Calu3 (cell line): ENCODE measurements at regions of chr2 and their contacts with region 1.

Region 1: GRCh38 chr2:180291060-180291459 is 284.0 kb upstream of the CWC22 start:
- DNase-seq: no peak
- H3K4me3 Mint-ChIP-seq: peak overlapping the region; percentile 42
- H3K27ac Mint-ChIP-seq: peak overlapping the region; percentile 80
- H3K4me1 Mint-ChIP-seq: peaks cover 50% of the 10 kb centered on the region
- H3K27me3 Mint-ChIP-seq: no peaks in the 10 kb centered on the region
- CTCF ChIP-seq: no peak

Region 2: GRCh38 chr2:180411661-180412060 is 120.6 kb after region 1 on chr2:
- CTCF ChIA-PET with region 1: interaction called, 3 read pairs
- intact Hi-C with region 1: loop called (anchors 2 kb)
- DNase-seq: peak; percentile 30
- H3K4me3 Mint-ChIP-seq: peak overlapping the region; percentile 40
- H3K27ac Mint-ChIP-seq: peak overlapping the region; percentile 83
- H3K4me1 Mint-ChIP-seq: peaks cover 29% of the 10 kb centered on the region
- H3K27me3 Mint-ChIP-seq: no peaks in the 10 kb centered on the region
- CTCF ChIP-seq: no peak

Region 3: GRCh38 chr2:180573958-180574357 is 282.9 kb after region 1 on chr2:
- CTCF ChIA-PET with region 1: no interaction called
- intact Hi-C with region 1: loop called (anchors 5 kb)
- DNase-seq: peak; percentile 30
- H3K4me3 Mint-ChIP-seq: peak overlapping the region; percentile 14
- H3K27ac Mint-ChIP-seq: peak overlapping the region; percentile 82
- H3K4me1 Mint-ChIP-seq: peaks cover 74% of the 10 kb centered on the region
- H3K27me3 Mint-ChIP-seq: no peaks in the 10 kb centered on the region
- CTCF ChIP-seq: no peak